Activated CD4-positive, alpha-beta T cell treated with anti-CD3 and anti-CD28 coated beads, Interleukin-2, amount 10 ng/mL, durations not matched to agents 7 days and 5 days (primary cell): ENCODE measurements at regions of chr11 and their contacts with region 1.

Region 1: DNA sequence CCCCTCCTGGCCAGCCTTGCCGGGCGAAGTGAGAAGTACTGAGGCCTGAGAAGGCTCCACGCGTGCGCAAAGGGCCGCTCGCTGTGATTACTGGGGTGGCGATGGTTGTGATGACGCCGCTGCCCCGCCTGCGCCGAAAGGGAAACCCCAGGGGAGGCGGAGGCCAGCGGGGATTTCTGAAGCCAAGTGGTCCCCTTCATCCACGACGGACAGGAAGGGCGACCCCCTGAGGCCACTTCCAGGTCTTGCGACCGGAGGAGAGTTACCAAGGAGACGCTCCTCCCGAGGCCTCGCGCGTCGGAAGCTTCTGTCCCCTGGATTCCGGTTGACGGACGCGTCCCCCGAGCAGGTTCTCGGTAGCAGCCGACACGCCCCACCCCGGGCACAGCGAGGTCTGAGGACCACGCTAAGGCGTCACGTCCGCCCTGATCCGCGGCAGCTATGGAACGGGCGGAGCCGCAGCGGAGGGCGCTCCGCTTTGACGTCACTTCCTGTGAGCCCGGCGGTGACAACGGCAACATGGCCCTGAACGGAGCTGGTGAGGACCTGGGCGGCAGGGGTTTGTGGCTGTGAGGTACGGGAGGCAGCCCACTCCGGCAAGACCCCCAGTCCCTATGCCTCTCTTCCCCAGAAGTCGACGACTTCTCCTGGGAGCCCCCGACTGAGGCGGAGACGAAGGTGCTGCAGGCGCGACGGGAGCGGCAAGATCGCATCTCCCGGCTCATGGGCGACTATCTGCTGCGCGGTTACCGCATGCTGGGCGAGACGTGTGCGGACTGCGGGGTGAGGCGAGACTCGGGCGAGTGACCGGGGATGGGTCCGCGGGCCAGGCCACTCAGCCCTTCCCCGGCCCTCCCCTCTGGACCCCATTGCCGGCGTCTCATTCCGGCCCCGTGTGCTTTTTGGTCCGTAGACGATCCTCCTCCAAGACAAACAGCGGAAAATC is at the start of gene ZNRD2:
- DNase-seq: peak; percentile 98
- H3K4me3 Mint-ChIP-seq: peak within 1 kb of the TSS; percentile 99
- H3K27ac Mint-ChIP-seq: peak within 1 kb of the TSS; percentile 99
- H3K4me1 Mint-ChIP-seq: peaks cover 58% of the 10 kb centered on the region
- H3K27me3 Mint-ChIP-seq: no peaks in the 10 kb centered on the region
- total RNA-seq, gene ZNRD2: 32.4 to 35.4 TPM

Region 2: DNA sequence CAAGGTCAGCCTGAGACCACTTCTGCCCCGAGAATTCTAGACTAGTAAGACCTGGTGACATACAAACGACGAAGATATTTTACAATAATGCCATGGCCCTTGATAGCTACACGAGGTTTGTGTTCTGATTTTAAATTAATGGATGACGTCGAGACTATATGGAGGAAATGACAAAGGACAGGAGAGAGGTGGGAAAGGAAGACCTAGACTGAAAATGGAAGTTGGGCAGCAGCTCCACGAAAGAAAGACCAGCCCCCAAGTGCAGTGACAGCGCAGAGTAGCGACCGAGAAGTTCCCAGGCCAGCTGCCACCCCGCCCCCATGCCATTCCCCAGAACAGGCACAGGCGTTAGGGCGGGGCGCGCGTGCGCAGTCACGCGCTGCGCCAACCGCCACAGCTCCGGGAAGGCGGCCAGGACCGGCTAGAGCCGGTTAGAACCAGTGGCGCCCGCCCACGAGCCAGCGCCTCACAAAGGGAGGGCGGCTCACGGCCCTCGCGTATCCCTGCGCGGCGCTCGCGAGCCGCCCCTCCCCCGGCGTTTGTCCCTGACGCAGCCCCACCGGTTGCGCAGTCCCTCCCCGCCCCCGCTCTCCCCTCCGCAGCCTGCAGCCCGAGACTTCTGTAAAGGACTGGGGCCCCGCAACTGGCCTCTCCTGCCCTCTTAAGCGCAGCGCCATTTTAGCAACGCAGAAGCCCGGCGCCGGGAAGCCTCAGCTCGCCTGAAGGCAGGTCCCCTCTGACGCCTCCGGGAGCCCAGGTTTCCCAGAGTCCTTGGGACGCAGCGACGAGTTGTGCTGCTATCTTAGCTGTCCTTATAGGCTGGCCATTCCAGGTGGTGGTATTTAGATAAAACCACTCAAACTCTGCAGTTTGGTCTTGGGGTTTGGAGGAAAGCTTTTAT is 72.9 kb before region 1 on chr11:
- CTCF ChIA-PET with region 1: interaction called, 3 read pairs
- POLR2A ChIA-PET with region 1: interaction called, 10 read pairs
- DNase-seq: peak; percentile 97
- H3K4me3 Mint-ChIP-seq: no peak overlapping the region
- H3K27ac Mint-ChIP-seq: no peak overlapping the region
- H3K4me1 Mint-ChIP-seq: peaks cover 36% of the 10 kb centered on the region
- H3K27me3 Mint-ChIP-seq: peaks cover 1% of the 10 kb centered on the region

Region 3: DNA sequence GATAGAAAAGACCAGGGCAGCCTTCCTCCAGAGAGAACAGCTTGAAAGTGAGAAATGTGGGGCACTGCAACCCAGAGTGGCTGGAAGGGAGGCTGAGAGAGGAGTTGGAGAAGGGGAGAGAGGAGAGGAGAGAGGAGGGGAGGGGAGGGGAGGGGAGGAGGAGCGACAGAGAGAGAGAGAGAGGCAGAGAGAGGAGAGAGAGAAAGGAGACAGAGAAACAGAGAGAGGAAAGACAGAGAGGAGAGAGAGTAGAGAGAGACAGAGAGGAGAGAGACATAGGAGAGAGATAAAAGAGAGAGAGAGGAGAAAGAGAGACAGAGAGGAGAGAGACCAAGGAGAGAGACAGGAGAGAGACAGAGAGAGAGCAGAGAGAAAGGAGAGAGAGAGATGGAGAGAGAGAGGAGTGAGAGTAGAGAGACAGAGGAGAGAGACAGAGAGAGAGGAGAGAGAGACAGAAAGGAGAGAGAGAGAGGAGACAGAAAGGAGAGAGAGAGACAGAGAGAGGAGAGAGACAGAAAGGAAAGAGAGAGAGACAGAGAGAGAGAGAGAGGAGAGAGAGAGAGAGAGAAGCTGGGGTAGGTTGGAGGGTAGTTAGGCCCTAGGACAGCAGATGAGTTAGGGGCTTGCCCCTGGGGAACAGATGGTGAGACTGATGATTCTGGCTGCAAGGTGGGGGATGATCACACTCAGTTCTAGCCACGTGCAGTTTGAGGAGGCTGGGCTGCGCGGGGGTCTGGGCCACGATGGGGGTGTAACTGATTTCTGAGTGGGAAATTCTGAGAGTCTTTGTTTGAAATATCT is 53.9 kb before region 1 on chr11:
- CTCF ChIA-PET with region 1: no interaction called
- POLR2A ChIA-PET with region 1: no interaction called
- DNase-seq: no peak
- H3K4me3 Mint-ChIP-seq: no peak overlapping the region
- H3K27ac Mint-ChIP-seq: peak overlapping the region; percentile 71
- H3K4me1 Mint-ChIP-seq: peaks cover 10% of the 10 kb centered on the region
- H3K27me3 Mint-ChIP-seq: peaks cover 2% of the 10 kb centered on the region

Region 4: GRCh38 chr11:65551572-65552398 is 18.5 kb before region 1 on chr11:
- CTCF ChIA-PET with region 1: interaction called, 37 read pairs
- POLR2A ChIA-PET with region 1: no interaction called
- DNase-seq: peak; percentile 71
- H3K4me3 Mint-ChIP-seq: no peak overlapping the region
- H3K27ac Mint-ChIP-seq: peak overlapping the region; percentile 62
- H3K4me1 Mint-ChIP-seq: peaks cover 75% of the 10 kb centered on the region
- H3K27me3 Mint-ChIP-seq: no peaks in the 10 kb centered on the region

Region 5: GRCh38 chr11:65558002-65558931 is 12.0 kb before region 1 on chr11 and contains the start of gene LTBP3:
- CTCF ChIA-PET with region 1: interaction called, 45 read pairs
- POLR2A ChIA-PET with region 1: interaction called, 7 read pairs
- DNase-seq: no peak
- H3K4me3 Mint-ChIP-seq: peak within 1 kb of the TSS; percentile 76
- H3K27ac Mint-ChIP-seq: peak within 1 kb of the TSS; percentile 91
- H3K4me1 Mint-ChIP-seq: peaks cover 57% of the 10 kb centered on the region
- H3K27me3 Mint-ChIP-seq: no peaks in the 10 kb centered on the region
- total RNA-seq, gene LTBP3: 80.2 to 92.5 TPM

Region 6: DNA sequence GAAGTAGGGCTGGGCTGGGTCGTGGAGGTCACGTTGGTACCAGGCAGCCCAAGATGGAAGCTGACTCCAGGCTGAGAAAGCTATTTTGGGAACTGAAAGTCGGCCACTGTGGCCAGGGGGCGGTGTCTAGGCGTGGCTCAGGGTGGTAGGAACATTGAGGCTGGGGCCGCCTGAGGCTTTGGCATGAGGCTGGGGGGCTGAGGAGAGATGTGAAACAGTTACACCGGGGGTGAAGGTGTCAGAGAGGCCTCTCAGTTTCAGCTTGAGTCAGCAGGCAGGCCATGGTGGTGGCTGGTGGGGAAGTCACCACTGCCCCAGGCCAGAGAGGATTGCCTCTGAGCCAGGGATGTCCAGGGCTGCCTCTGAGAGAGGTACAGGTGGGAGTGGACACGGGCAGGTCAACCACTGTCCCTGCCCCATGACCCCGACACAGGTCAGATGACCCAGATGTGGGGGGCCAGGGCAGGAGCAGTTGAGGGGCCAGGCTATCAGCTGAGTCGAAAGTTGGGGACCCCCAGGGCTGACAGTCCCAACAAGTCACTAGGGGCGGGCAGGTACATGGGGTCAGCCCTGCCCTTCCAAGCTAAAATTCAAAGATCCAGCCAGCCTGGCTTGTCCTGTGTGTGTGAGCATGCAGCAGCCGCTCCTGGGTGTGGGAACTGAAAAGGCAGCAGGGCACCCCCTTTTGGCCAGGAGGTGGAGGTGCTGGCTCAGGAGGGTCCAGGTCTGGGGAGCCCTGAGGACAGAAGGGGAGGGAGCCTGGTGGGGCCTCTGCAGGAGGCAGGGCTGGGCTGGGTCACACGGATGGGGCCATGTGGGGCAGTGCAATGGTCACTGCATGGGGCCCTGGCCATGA is 18.2 kb after region 1 on chr11:
- CTCF ChIA-PET with region 1: interaction called, 40 read pairs
- POLR2A ChIA-PET with region 1: interaction called, 3 read pairs
- DNase-seq: peak; percentile 82
- H3K4me3 Mint-ChIP-seq: peak overlapping the region; percentile 26
- H3K27ac Mint-ChIP-seq: peak overlapping the region; percentile 86
- H3K4me1 Mint-ChIP-seq: peaks cover 40% of the 10 kb centered on the region
- H3K27me3 Mint-ChIP-seq: no peaks in the 10 kb centered on the region

Region 7: GRCh38 chr11:65593518-65594298 is 23.5 kb after region 1 on chr11:
- CTCF ChIA-PET with region 1: interaction called, 40 read pairs
- POLR2A ChIA-PET with region 1: interaction called, 3 read pairs
- DNase-seq: peak; percentile 52
- H3K4me3 Mint-ChIP-seq: no peak overlapping the region
- H3K27ac Mint-ChIP-seq: peak overlapping the region; percentile 57
- H3K4me1 Mint-ChIP-seq: peaks cover 34% of the 10 kb centered on the region
- H3K27me3 Mint-ChIP-seq: no peaks in the 10 kb centered on the region

Region 8: GRCh38 chr11:65615229-65615941 is 45.1 kb after region 1 on chr11 and contains the start of gene PCNX3:
- CTCF ChIA-PET with region 1: interaction called, 34 read pairs
- POLR2A ChIA-PET with region 1: no interaction called
- DNase-seq: peak; percentile 100
- H3K4me3 Mint-ChIP-seq: peak within 1 kb of the TSS; percentile 95
- H3K27ac Mint-ChIP-seq: peak within 1 kb of the TSS; percentile 97
- H3K4me1 Mint-ChIP-seq: peaks cover 50% of the 10 kb centered on the region
- H3K27me3 Mint-ChIP-seq: no peaks in the 10 kb centered on the region
- total RNA-seq, gene PCNX3: 47.7 to 50.2 TPM